ENCODE measurements at regions of chr12 and their contacts with region 1.

Region 1: DNA sequence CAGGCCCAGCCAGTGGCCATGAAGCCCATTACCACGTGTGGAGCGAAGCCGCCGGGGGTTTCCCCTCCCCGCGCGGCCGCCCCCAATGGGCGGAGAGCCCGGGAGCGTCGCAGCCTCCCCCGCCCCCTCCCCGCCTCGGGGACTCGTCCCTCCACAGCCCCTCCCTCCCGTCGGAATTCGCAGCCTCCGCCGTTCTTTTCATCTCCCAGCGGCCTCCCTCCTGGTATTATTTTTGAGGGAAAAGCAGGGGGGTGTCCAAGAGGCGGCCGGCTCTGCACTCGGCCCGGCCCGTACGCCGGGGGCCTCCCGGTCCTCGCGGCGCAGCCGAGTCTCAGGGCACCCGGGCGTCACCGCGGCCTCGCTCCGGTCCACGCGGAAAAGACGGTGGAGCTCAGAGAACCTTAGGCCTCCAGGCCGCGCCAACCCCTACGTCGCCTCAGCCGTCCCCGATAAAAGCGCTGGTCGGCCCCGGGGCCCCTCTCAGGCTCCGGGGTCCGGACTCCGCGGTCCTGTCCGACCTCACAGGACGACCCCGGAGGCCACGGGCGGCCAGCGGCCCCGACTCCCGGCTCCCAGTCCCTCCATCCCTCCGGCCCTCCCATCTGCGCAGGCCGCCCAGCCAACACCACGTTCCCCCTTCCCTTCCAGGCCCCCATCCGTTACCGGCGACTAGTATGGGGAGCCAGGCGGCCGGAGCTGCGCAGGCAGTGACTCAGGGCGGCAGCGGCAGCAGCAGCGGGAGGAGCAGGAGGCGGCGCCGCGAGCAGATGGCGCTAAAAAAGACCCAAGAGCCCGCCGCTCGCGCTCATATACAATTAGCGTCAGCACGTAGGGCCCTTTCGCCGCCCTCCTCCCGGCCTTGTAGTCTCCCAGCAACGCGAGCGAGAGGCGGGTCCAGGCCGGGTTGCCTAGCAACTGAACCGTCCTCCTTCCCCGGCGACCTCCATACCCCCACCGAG is at the start of gene NAP1L1:
- DNase-seq: peak; percentile 94 to 97 (median 96)
- H3K4me3 ChIP-seq: peak within 1 kb of the TSS; percentile 38 to 85
- H3K4me3 Mint-ChIP-seq: peak within 1 kb of the TSS; percentile 93 to 100 (median 98)
- H3K27ac ChIP-seq: peak within 1 kb of the TSS; percentile 100
- H3K27ac Mint-ChIP-seq: peak within 1 kb of the TSS; percentile 99 to 100 (median 100)
- H3K4me1 ChIP-seq: peaks cover 53% of the 10 kb centered on the region
- H3K4me1 Mint-ChIP-seq: peaks cover 33 to 68% (median 44%) of the 10 kb centered on the region in 4 donors
- H3K27me3 ChIP-seq: no peaks in the 10 kb centered on the region
- H3K27me3 Mint-ChIP-seq: peaks cover 0 to 2% of the 10 kb centered on the region in 2 donors
- total RNA-seq, gene NAP1L1: 673 to 718 TPM

Region 2: DNA sequence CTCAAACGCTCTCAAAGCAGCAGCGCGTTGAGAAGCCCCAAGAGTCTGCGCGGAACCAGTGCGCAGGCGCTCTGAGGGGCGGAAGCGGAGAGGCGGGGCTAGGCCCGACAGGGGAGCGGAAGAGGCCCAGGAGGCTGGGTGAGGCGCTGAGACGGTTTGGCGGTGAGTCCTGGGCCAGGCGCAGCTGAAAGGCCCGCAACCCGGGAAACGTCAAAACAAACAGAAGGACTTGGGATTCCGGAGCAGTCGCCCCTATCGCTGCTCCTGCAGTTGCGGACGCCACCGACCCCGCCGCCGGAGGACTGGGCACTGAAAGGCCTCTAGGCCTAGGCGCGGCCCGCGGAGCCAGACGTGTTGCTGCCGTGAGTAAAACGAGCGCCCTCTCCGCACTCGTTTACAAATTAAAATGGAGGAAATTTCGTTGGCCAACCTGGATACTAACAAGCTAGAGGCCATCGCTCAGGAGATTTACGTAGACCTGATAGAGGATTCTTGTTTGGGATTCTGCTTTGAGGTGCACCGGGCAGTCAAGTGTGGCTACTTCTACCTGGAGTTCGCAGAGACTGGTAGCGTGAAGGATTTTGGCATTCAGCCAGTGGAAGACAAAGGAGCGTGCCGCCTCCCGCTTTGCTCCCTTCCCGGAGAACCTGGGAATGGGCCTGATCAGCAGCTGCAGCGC is 1546.3 kb before region 1 on chr12 and contains the start of gene ATXN7L3B:
- CTCF ChIA-PET with region 1: no interaction called
- POLR2A ChIA-PET with region 1: no interaction called
- intact Hi-C with region 1: loop called (anchors 5 kb)
- DNase-seq: peak; percentile 95 to 97 (median 97)
- H3K4me3 ChIP-seq: peak within 1 kb of the TSS; percentile 92 to 99
- H3K4me3 Mint-ChIP-seq: peak within 1 kb of the TSS; percentile 81 to 99 (median 96)
- H3K27ac ChIP-seq: peak within 1 kb of the TSS; percentile 95
- H3K27ac Mint-ChIP-seq: peak within 1 kb of the TSS; percentile 97 to 100 (median 99)
- H3K4me1 ChIP-seq: peaks cover 48% of the 10 kb centered on the region
- H3K4me1 Mint-ChIP-seq: peaks cover 39 to 60% (median 49%) of the 10 kb centered on the region in 4 donors
- H3K27me3 ChIP-seq: no peaks in the 10 kb centered on the region
- H3K27me3 Mint-ChIP-seq: no peaks in the 10 kb centered on the region
- total RNA-seq, gene ATXN7L3B: 45.1 to 46.2 TPM

Region 3: DNA sequence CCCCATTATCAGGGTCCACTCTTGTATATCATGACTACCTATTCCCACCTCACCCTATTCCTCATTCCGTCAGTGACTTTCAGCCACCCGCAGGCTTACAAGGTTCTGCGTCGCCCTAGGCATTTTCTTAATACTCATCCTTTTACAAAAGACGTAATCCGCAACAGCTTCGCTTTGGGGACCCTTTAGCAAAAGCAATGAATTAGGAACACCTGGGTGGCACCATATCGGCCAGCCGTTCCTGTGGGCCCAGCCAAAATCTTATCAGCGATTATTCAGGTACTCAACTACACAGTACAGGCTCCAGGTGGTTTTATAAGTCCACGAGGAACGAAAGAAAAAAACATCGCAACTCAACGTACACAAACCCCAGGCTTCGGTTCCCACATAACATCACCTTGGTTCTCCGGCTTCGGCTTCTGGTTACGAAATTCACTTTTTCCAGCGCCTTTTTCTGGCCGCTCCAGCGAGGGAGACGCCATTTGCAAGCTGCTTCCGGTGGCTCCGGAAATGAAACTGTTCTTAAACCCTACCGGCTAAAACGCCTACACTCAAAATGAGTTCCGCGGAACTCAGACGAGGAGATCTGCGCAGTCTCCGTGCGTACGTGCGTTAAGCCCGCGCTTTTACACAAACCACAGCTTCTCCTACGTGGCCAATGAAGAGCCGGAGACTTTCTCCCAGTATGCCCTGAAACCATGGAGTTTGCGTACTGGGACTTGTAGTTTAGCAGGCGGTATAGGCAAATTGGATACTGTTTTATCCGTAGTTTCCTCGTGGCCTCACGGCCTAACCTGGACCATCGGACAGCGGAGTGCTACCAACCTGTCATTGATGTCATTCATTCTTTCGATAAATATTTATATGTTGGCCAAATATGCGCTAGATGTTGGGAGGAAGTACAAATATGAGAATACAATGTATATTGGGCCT is 572.8 kb before region 1 on chr12 and contains the start of gene KRR1:
- CTCF ChIA-PET with region 1: no interaction called
- POLR2A ChIA-PET with region 1: interaction called, 10 read pairs
- intact Hi-C with region 1: loop called (anchors 1 kb)
- DNase-seq: peak; percentile 88 to 94 (median 92)
- H3K4me3 ChIP-seq: peak within 1 kb of the TSS; percentile 85 to 99
- H3K4me3 Mint-ChIP-seq: peak within 1 kb of the TSS; percentile 99 to 100 (median 100)
- H3K27ac ChIP-seq: peak within 1 kb of the TSS; percentile 94
- H3K27ac Mint-ChIP-seq: peak within 1 kb of the TSS; percentile 98 to 100 (median 100)
- H3K4me1 ChIP-seq: peaks cover 27% of the 10 kb centered on the region
- H3K4me1 Mint-ChIP-seq: peaks cover 25 to 42% (median 31%) of the 10 kb centered on the region in 4 donors
- H3K27me3 ChIP-seq: no peaks in the 10 kb centered on the region
- H3K27me3 Mint-ChIP-seq: no peaks in the 10 kb centered on the region
- total RNA-seq, gene KRR1: 60.7 to 65.0 TPM

Region 4: DNA sequence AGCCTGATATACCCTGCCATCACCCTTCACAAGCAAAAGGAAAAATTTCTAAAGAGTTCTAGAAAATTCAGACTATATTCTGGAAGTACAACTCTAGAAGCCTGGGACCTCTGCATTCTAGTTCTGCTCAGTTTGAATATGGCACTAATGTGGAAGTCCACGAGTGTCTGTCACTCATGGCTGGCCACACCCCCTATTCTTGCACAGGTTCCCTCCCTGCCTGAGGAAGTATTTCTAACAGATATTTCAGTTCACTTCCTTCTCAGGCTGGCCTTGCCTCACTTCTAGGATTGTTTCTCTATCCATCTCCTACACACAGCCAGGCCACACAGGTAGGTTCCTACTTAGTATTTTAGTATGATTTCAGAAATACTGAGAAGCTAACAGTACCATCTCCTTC is 120.0 kb before region 1 on chr12:
- CTCF ChIA-PET with region 1: no interaction called
- POLR2A ChIA-PET with region 1: no interaction called
- intact Hi-C with region 1: no loop called
- DNase-seq: no peak
- H3K4me3 ChIP-seq: no peak overlapping the region
- H3K4me3 Mint-ChIP-seq: no peak overlapping the region
- H3K27ac ChIP-seq: no peak overlapping the region
- H3K27ac Mint-ChIP-seq: peak overlapping the region in 1 of 7 donors; percentile 76
- H3K4me1 ChIP-seq: peaks cover 14% of the 10 kb centered on the region
- H3K4me1 Mint-ChIP-seq: peaks cover 14 to 31% (median 20%) of the 10 kb centered on the region in 4 donors
- H3K27me3 ChIP-seq: no peaks in the 10 kb centered on the region
- H3K27me3 Mint-ChIP-seq: no peaks in the 10 kb centered on the region

Region 5: DNA sequence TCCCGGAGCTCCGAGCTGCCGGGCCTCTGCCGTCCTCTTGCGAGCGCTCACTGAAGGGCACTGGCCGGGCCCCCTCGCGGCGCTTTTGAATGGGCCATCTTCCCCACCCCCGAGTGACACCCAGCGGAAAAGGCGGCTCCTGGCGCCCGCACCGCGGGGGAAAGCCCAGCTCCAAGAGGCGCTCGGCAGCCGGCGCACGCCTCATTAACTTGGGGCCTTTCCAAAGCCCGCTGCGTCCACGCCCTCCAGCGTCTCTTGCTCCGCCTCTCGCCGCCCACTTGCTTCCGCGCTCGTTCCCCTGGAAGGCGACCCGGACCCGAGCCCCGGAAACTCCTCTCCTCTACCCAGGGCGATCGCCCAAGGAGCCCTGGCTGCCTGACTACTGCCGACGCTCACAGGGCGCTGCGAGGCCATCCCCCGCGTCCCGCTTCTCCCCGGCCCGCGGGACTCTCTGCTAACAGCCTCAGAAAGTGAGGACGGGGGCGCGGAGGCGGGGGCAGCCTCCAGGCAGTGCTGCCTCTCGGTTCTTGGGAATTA is 52.6 kb before region 1 on chr12 and contains the start of gene PHLDA1:
- CTCF ChIA-PET with region 1: interaction called, 3 read pairs
- POLR2A ChIA-PET with region 1: interaction called, 25 read pairs
- intact Hi-C with region 1: loop called (anchors 1 kb)
- DNase-seq: peak; percentile 88 to 95 (median 91)
- H3K4me3 ChIP-seq: peak within 1 kb of the TSS; percentile 69 to 84
- H3K4me3 Mint-ChIP-seq: peak within 1 kb of the TSS; percentile 90 to 98 (median 94)
- H3K27ac ChIP-seq: peak within 1 kb of the TSS; percentile 89
- H3K27ac Mint-ChIP-seq: peak within 1 kb of the TSS; percentile 94 to 98 (median 98)
- H3K4me1 ChIP-seq: peaks cover 24% of the 10 kb centered on the region
- H3K4me1 Mint-ChIP-seq: peaks cover 18 to 45% (median 31%) of the 10 kb centered on the region in 4 donors
- H3K27me3 ChIP-seq: no peaks in the 10 kb centered on the region
- H3K27me3 Mint-ChIP-seq: no peaks in the 10 kb centered on the region
- total RNA-seq, gene PHLDA1: 8.2 to 8.5 TPM

Region 6: GRCh38 chr12:76158518-76159321 is 74.5 kb after region 1 on chr12:
- CTCF ChIA-PET with region 1: interaction called, 7 read pairs
- POLR2A ChIA-PET with region 1: no interaction called
- intact Hi-C with region 1: loop called (anchors 1 kb)
- DNase-seq: peak; percentile 46 to 57 (median 51)
- H3K4me3 ChIP-seq: peak overlapping the region in 1 of 2 donors; percentile 20
- H3K4me3 Mint-ChIP-seq: peak overlapping the region; percentile 68 to 77 (median 75)
- H3K27ac ChIP-seq: no peak overlapping the region
- H3K27ac Mint-ChIP-seq: peak overlapping the region in 6 of 7 donors; percentile 2 to 83 (median 70)
- H3K4me1 ChIP-seq: no peaks in the 10 kb centered on the region
- H3K4me1 Mint-ChIP-seq: peaks cover 8 to 11% (median 10%) of the 10 kb centered on the region in 4 donors
- H3K27me3 ChIP-seq: no peaks in the 10 kb centered on the region
- H3K27me3 Mint-ChIP-seq: no peaks in the 10 kb centered on the region

Region 7: GRCh38 chr12:76337583-76337982 is 253.4 kb after region 1 on chr12:
- CTCF ChIA-PET with region 1: no interaction called
- POLR2A ChIA-PET with region 1: no interaction called
- intact Hi-C with region 1: no loop called
- DNase-seq: no peak
- H3K4me3 ChIP-seq: no peak overlapping the region
- H3K4me3 Mint-ChIP-seq: no peak overlapping the region
- H3K27ac ChIP-seq: no peak overlapping the region
- H3K27ac Mint-ChIP-seq: no peak overlapping the region
- H3K4me1 ChIP-seq: no peaks in the 10 kb centered on the region
- H3K4me1 Mint-ChIP-seq: no peaks in the 10 kb centered on the region
- H3K27me3 ChIP-seq: peaks cover 5% of the 10 kb centered on the region
- H3K27me3 Mint-ChIP-seq: peaks cover 5 to 9% of the 10 kb centered on the region in 2 donors

Region 8: GRCh38 chr12:76417116-76417515 is 332.9 kb after region 1 on chr12:
- CTCF ChIA-PET with region 1: no interaction called
- POLR2A ChIA-PET with region 1: no interaction called
- intact Hi-C with region 1: no loop called
- DNase-seq: no peak
- H3K4me3 ChIP-seq: no peak overlapping the region
- H3K4me3 Mint-ChIP-seq: no peak overlapping the region
- H3K27ac ChIP-seq: no peak overlapping the region
- H3K27ac Mint-ChIP-seq: peak overlapping the region in 4 of 7 donors; percentile 26 to 49 (median 46)
- H3K4me1 ChIP-seq: peaks cover 14% of the 10 kb centered on the region
- H3K4me1 Mint-ChIP-seq: peaks cover 15 to 23% (median 20%) of the 10 kb centered on the region in 4 donors
- H3K27me3 ChIP-seq: no peaks in the 10 kb centered on the region
- H3K27me3 Mint-ChIP-seq: no peaks in the 10 kb centered on the region

Region 9: DNA sequence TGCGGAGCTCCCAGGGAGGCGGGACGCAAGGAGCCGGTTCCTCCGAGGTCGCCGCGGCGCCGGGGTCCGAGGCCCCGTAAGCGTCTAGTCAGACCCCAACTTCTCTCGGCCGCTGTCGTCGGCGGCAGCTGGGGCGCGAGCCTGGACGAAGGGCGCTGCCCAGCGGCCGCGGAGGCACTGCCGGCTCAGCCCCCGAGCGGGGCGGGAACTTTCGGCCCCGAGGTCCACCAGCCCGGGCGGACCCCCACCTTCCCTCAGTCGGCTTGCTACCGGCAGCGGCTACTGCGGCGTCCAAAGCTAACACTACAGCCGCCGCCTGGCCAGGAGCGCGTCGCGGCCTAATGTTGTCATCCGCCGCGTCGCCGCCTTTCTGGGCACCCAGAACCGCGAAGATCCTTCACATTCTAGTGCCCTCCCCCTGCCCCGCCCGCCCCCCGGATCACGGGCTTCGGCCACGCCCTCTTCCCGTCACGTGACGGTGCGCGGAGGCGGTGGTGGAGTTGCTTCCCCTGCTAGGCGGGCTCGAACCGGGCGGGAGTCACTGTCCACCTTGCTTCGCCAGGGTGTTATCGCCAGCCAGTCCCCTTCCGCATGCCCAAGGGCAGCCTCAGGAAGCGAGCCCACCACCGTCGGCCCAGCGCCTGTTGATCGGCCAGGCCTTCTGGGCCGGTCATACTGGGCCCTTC is 475.4 kb after region 1 on chr12 and contains the start of gene OSBPL8:
- CTCF ChIA-PET with region 1: no interaction called
- POLR2A ChIA-PET with region 1: interaction called, 19 read pairs
- intact Hi-C with region 1: loop called (anchors 1 kb)
- DNase-seq: peak; percentile 89 to 94 (median 90)
- H3K4me3 ChIP-seq: peak within 1 kb of the TSS; percentile 95
- H3K4me3 Mint-ChIP-seq: peak within 1 kb of the TSS; percentile 96 to 97 (median 96)
- H3K27ac ChIP-seq: peak within 1 kb of the TSS; percentile 89
- H3K27ac Mint-ChIP-seq: peak within 1 kb of the TSS; percentile 94 to 99 (median 98)
- H3K4me1 ChIP-seq: peaks cover 46% of the 10 kb centered on the region
- H3K4me1 Mint-ChIP-seq: peaks cover 24 to 52% (median 31%) of the 10 kb centered on the region in 4 donors
- H3K27me3 ChIP-seq: no peaks in the 10 kb centered on the region
- H3K27me3 Mint-ChIP-seq: no peaks in the 10 kb centered on the region
- total RNA-seq, gene OSBPL8: 126 to 127 TPM

Region 10: DNA sequence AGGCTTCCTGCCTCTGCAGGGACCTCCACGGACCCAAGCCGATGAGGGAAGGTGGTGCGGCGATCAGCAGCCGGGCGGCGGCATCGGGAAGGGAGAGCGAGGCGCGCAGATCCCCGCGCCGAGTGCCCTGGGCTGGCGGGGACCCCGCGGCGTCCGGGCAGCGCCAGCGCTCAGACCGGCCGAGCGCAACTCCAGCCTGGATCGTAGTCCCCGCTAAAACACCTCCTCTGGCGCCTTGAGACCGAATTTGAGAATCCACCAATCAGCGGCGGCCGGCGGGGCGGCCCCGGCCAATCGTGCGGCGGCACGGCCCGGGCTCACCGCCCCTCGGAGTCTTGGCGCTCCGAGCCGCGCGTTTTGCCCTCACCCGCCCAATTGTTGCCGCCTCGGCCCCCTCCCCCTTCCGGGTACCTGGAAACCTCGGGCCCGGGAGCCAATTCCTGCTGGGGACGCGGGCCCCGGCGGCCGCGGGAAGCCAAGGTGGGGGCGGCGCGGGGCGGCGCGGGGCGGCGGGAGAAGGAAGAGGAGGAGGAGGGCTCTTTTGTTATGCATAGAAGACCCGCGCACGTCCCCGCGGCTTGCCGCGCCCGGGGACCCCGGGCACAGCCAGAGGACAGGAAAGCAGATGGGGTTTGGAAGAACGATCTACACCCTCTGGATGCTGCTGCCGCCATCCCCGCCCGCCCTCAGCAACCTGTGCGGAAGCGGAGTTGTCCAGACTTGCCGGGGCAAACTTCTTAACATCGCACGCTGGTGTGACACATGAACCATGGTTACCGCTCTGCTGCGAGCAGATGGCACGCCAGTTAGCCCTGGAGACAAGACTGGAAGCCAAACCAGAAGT is 981.4 kb after region 1 on chr12 and contains the start of gene E2F7:
- CTCF ChIA-PET with region 1: no interaction called
- POLR2A ChIA-PET with region 1: no interaction called
- intact Hi-C with region 1: loop called (anchors 10 kb)
- DNase-seq: peak; percentile 73 to 81 (median 78)
- H3K4me3 ChIP-seq: peak within 1 kb of the TSS in 1 of 2 donors; percentile 67
- H3K4me3 Mint-ChIP-seq: peak within 1 kb of the TSS; percentile 82 to 91 (median 90)
- H3K27ac ChIP-seq: no peak within 1 kb of the TSS
- H3K27ac Mint-ChIP-seq: peak within 1 kb of the TSS in 6 of 7 donors; percentile 7 to 81 (median 54)
- H3K4me1 ChIP-seq: peaks cover 11% of the 10 kb centered on the region
- H3K4me1 Mint-ChIP-seq: peaks cover 4 to 7% (median 5%) of the 10 kb centered on the region in 4 donors
- H3K27me3 ChIP-seq: no peaks in the 10 kb centered on the region
- H3K27me3 Mint-ChIP-seq: peaks cover 7 to 14% of the 10 kb centered on the region in 2 donors
- total RNA-seq, gene E2F7: 0.17 to 0.26 TPM

Measured in CD4-positive, alpha-beta memory T cell (primary cell).